G401 (cell line): ENCODE measurements at regions of chr6 and their contacts with region 1.

Region 1: DNA sequence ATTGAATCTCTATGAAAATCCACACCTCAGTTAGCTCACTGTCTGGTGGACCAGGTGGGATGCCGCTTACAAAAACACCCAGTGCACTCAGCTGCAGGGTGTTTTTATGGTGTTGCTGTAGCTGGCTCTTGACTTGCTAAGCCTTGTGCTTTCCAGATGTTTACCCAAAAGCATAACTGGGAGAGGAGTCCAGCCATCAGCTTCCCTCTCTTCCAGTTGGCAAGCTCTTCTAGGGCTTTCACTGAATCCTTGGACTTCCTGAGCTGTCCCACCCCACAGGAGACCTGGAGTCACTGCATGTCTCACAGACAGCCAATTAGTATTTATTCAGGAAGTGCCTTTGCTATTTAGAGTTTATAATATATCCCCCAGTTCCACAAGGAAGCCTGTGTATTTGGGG is 210.9 kb downstream of the FNDC1 start:
- DNase-seq: no peak

Region 2: DNA sequence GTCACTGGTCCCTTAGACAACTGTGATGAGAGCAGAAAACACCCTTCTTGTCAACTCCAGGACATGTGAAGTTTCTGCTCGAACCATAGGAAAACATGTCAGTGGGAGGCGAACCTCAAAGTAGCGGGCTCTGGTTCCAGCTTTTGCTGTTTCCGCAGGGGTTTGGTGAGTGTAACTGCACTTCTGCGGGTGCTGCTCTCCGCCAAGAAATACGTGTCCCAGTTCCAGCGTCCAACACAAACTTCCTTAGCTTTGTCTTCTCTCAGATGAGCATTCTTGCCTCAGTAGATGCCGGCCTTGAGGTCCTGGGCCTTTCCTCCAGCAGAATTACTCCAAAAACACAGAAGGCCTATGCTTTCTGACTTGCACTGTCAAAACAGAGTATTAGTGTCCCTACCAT is 54.6 kb before region 1 on chr6:
- in situ Hi-C with region 1: loop called (anchors 5 kb)
- DNase-seq: no peak